Left lung (tissue), 14 donors: ENCODE measurements at regions of chr1 and their contacts with region 1.

Region 1: DNA sequence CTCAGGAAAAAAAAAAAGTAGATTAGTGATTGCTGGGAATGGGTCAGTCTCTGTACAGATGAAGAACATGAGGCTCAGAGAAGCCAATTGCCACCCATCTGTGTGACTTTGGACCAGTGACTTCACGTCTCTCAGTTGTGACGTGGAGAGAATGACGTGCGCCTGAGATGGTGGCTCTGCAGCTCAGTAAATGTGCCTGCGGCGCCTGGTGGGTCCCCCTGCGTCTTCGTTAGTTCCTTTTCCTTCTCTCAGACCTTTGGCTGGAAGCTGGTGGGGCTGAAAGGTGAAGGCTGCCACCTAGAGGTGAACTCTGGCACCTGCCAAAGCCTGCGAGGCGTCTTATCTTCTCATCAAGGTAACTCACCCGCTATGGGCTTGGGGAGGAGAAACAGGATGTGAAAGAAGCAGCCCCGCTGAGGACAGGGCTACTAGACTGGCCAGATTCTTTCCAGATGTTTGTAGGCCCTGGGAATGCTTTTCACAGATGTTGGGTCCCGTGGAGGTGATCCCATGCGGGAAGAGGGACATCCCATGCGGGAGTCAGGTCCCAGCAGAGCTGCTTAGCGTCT is 8.7 kb upstream of the E2F2 start:
- DNase-seq: peak in 3 of 4 donors; percentile 89 to 92 (median 89)
- ATAC-seq: peak; percentile 93
- H3K4me3 ChIP-seq: no peak overlapping the region
- H3K27ac ChIP-seq: no peak overlapping the region
- H3K4me1 ChIP-seq: peaks cover 5 to 28% of the 10 kb centered on the region in 2 donors
- H3K27me3 ChIP-seq: no peaks in the 10 kb centered on the region
- CTCF ChIP-seq: peak; percentile 84 to 95

Region 2: GRCh38 chr1:23496490-23497181 is 43.1 kb before region 1 on chr1:
- intact Hi-C with region 1: loop called in 1 of 2 experiments (anchors 5 kb)
- DNase-seq: peak in 1 of 4 donors; percentile 19
- ATAC-seq: no peak
- H3K4me3 ChIP-seq: no peak overlapping the region
- H3K27ac ChIP-seq: no peak overlapping the region
- H3K4me1 ChIP-seq: peaks cover 0 to 14% of the 10 kb centered on the region in 2 donors
- H3K27me3 ChIP-seq: no peaks in the 10 kb centered on the region
- CTCF ChIP-seq: no peak

Region 3: DNA sequence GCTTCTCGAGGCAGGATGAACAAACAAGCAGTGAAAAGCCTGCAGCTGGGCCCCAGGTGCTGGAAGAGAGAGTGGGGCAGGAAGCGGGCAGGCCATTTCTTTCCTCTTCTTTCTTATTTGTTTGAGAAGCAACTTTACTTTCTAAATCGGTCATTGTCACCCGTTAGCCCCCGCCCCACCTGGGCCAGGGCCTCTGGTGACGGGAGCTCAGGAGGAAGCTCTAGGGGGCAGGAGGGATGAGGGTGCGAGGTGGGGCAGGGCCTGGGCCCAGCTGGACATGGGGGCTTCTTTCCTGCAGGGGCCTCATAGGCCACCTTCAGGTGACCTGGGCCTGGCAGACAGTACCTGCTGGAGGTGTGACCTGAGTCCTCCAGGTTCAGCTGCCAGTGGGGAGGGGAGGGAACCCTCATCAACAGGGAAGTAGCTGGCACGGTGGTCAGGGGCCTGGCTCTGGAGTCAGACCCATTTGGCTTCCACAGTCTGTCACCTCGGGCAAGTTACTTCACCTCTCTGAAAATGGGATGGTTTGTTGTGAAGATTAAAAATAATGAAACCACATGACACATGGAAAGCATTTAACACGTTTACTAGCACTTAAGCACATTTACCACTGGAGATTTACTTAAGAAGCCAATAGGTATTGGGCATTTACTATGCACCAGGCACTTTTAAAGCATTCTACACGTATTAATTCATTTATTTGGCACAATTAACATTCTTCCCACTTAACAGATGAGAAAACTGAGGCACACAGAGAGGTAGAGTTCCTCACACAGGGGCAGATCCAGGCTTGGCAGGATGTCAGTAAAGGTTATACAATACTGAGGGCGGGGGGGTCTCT is 73.6 kb after region 1 on chr1:
- intact Hi-C with region 1: no loop called
- DNase-seq: no peak
- ATAC-seq: no peak
- H3K4me3 ChIP-seq: no peak overlapping the region
- H3K27ac ChIP-seq: peak overlapping the region in 1 of 2 donors; percentile 18
- H3K4me1 ChIP-seq: no peaks in the 10 kb centered on the region
- H3K27me3 ChIP-seq: peaks cover 0 to 9% of the 10 kb centered on the region in 2 donors
- CTCF ChIP-seq: no peak

Region 4: GRCh38 chr1:23634842-23635651 is 95.3 kb after region 1 on chr1:
- intact Hi-C with region 1: loop called (anchors 2 to 10 kb)
- DNase-seq: peak; percentile 43 to 80 (median 54)
- ATAC-seq: peak; percentile 88
- H3K4me3 ChIP-seq: peak overlapping the region in 1 of 2 donors; percentile 34
- H3K27ac ChIP-seq: peak overlapping the region; percentile 67 to 78
- H3K4me1 ChIP-seq: peaks cover 0 to 20% of the 10 kb centered on the region in 2 donors
- H3K27me3 ChIP-seq: no peaks in the 10 kb centered on the region
- CTCF ChIP-seq: peak; percentile 89 to 98